Activated CD4-positive, alpha-beta T cell treated with anti-CD3 and anti-CD28 coated beads, Interleukin-2, amount 10 ng/mL, durations not matched to agents 24 days and 14 days (primary cell): ENCODE measurements at regions of chr6 and their contacts with region 1.

Region 1: DNA sequence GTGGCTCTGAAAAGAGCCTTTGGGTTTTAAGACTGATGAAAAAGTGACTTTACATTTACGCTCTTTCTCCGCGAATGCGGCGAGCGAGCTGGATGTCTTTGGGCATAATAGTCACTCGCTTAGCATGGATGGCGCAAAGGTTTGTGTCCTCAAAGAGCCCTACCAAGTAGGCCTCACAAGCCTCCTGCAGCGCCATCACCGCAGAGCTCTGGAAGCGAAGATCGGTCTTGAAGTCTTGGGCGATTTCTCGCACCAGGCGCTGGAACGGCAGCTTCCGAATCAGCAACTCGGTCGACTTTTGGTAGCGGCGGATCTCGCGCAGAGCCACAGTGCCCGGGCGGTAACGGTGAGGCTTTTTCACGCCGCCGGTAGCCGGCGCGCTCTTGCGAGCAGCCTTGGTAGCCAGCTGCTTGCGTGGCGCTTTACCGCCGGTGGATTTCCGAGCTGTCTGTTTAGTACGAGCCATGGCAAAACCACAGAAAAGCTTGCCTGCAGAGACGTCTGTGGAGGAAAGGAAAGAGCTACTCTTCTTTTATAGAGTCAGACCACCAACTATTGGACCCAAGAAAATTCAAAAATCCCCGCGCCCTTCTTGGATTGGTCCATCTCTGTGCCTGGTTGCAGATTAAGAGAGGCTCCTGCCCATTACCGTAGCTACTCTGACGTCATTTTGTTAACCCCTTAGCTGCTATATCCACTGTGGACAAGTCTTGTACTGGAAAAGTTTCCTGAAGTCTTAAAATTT is 55.5 kb upstream of the HFE start:
- DNase-seq: peak; percentile 97
- H3K4me3 Mint-ChIP-seq: peak overlapping the region; percentile 92
- H3K27ac Mint-ChIP-seq: peak overlapping the region; percentile 97
- H3K4me1 Mint-ChIP-seq: peaks cover 66% of the 10 kb centered on the region
- H3K27me3 Mint-ChIP-seq: peaks cover 3% of the 10 kb centered on the region

Region 2: DNA sequence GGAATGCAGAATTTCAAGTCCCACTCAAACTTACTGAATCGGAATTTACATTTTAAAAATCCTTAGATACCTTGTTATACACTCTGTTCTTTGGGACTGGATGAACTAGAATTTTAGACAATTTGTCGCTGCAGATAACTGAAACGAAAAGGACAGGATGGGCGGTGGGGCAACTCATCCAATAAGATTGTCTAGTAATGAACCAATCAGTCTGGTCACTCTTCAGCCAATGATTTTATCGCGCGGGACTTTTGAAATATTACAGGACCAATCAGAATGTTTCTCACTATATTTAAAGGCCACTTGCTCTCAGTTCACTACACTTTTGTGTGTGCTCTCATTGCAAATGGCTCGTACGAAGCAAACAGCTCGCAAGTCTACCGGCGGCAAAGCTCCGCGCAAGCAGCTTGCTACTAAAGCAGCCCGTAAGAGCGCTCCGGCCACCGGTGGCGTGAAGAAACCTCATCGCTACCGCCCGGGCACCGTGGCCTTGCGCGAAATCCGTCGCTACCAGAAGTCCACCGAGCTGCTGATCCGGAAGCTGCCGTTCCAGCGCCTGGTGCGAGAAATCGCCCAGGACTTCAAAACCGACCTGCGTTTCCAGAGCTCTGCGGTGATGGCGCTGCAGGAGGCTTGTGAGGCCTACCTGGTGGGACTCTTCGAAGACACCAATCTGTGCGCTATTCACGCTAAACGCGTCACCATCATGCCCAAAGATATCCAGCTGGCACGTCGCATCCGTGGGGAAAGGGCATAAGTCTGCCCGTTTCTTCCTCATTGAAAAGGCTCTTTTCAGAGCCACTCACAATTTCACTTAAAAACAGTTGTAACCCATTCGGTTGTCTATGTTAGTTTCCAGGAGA is 13.5 kb after region 1 on chr6:
- intact Hi-C with region 1: loop called (anchors 1 kb)
- DNase-seq: peak; percentile 96
- H3K4me3 Mint-ChIP-seq: peak overlapping the region; percentile 86
- H3K27ac Mint-ChIP-seq: peak overlapping the region; percentile 99
- H3K4me1 Mint-ChIP-seq: peaks cover 33% of the 10 kb centered on the region
- H3K27me3 Mint-ChIP-seq: no peaks in the 10 kb centered on the region

Region 3: DNA sequence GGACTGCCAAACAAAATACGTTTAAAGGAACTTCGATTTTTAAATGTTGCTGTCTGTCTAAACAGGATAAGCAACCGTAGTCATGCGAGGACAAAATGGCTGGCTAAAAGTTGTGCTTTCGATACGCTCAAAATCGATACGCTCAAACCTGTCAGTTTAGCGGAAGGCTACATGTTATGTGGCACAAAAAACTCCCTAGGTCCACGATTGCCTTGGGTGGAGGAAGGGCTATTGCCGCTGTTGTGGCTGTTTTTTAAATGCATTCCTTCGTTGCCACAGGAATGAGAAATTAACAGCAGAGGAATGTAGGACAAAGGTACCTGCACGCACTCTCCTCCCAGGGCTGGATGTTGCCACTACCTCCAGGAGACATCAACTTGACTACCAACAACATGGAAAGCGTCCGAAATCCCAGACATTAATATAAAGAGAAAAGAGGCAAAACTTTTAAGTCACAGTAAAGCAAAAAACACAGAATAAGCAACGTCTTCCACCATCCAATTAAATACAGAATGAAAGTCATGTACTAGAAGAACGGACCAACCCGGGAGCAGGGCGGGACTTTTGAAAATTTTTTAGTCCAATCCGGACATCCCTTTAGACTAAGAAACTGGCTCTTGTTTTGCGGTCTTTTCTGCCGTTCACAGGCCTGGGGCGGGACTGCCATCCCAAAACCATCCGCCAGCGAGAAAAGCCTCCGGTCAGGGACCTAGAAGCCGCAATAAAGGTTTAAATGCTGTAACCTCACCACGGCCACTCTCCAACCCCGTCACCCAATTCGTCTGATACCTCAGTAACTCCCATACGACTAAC is 23.3 kb after region 1 on chr6:
- intact Hi-C with region 1: loop called (anchors 1 kb)
- DNase-seq: peak; percentile 96
- H3K4me3 Mint-ChIP-seq: peak overlapping the region; percentile 94
- H3K27ac Mint-ChIP-seq: peak overlapping the region; percentile 99
- H3K4me1 Mint-ChIP-seq: peaks cover 30% of the 10 kb centered on the region
- H3K27me3 Mint-ChIP-seq: peaks cover 2% of the 10 kb centered on the region

Region 4: DNA sequence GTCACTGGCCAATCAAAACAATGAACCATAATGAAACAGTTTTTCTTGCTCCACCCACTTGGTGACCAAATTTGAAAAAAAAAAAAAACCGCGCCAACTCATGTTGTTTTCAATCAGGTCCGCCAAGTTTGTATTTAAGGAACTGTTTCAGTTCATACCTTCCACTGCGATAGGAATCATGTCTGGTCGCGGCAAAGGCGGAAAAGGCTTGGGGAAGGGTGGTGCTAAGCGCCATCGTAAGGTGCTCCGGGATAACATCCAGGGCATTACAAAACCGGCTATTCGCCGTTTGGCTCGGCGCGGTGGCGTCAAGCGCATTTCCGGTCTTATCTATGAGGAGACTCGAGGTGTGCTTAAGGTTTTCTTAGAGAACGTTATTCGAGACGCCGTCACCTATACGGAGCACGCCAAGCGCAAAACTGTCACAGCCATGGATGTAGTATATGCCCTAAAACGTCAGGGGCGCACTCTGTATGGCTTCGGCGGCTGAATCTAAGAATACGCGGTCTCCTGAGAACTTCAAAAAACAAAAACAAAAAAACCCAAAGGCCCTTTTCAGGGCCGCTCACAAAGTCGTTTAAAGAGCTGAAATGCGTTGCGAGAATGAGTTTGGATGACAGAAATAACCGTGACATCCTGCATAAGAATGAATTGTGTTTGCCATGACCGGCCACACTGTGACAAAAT is 72.1 kb after region 1 on chr6:
- intact Hi-C with region 1: loop called (anchors 1 kb)
- DNase-seq: peak; percentile 97
- H3K4me3 Mint-ChIP-seq: peak overlapping the region; percentile 85
- H3K27ac Mint-ChIP-seq: peak overlapping the region; percentile 94
- H3K4me1 Mint-ChIP-seq: peaks cover 19% of the 10 kb centered on the region
- H3K27me3 Mint-ChIP-seq: peaks cover 5% of the 10 kb centered on the region

Region 5: GRCh38 chr6:26322645-26323482 is 291.1 kb after region 1 on chr6:
- intact Hi-C with region 1: no loop called
- DNase-seq: peak; percentile 92
- H3K4me3 Mint-ChIP-seq: peak overlapping the region; percentile 89
- H3K27ac Mint-ChIP-seq: peak overlapping the region; percentile 93
- H3K4me1 Mint-ChIP-seq: peaks cover 37% of the 10 kb centered on the region
- H3K27me3 Mint-ChIP-seq: peaks cover 6% of the 10 kb centered on the region

Region 6: GRCh38 chr6:27864906-27865849 is 1833.4 kb after region 1 on chr6:
- intact Hi-C with region 1: loop called (anchors 5 kb)
- DNase-seq: peak; percentile 95
- H3K4me3 Mint-ChIP-seq: peak overlapping the region; percentile 97
- H3K27ac Mint-ChIP-seq: peak overlapping the region; percentile 100
- H3K4me1 Mint-ChIP-seq: peaks cover 58% of the 10 kb centered on the region
- H3K27me3 Mint-ChIP-seq: peaks cover 2% of the 10 kb centered on the region